MCF 10A (cell line): ENCODE measurements at regions of chr1 and their contacts with region 1.

Region 1: DNA sequence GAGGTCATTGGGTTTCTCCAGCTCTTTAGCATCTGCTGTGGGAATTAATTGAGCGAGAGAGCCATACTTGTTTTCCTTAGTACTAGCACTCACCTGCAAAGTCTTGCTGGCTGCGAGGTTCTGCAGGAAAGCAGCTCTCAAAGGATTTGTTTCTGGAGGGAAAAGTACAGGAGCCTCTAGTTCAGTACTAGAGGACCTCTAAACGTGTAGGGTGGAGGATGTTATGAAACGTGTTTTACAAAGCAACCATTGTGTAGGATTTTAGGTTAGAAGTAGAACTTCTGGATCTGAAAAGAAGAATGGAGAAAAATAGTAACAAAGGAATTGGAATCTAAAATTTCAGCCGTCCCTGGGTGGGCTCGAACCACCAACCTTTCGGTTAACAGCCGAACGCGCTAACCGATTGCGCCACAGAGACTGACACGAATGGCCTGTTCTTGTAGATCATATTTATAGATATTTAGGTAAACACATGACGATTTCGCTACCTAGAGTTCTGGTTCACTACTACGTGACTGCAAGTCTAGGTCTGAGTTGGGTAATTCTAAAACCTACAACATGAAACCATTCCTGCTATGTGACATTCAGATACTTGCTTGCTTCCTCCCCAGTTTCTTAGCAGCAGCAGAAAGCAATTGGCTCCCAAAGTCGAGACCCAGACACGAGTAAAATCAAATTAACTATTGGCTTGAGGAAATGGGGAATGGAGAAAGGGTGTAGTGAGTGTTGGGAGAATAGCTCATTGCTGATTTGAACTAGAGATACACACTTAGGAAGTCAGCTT is 60.2 kb upstream of the CFAP126 start:
- DNase-seq: peak; percentile 72
- H3K4me3 Mint-ChIP-seq: peak overlapping the region; percentile 37
- H3K27ac Mint-ChIP-seq: peak overlapping the region; percentile 32
- H3K4me1 Mint-ChIP-seq: peaks cover 16% of the 10 kb centered on the region
- H3K27me3 Mint-ChIP-seq: peaks cover 14% of the 10 kb centered on the region
- CTCF ChIP-seq: no peak

Region 2: GRCh38 chr1:161399257-161399998 is 28.5 kb before region 1 on chr1:
- CTCF ChIA-PET with region 1: interaction called, 4 read pairs
- POLR2A ChIA-PET with region 1: interaction called, 10 read pairs
- intact Hi-C with region 1: loop called (anchors 2 kb)
- DNase-seq: peak; percentile 93
- H3K4me3 Mint-ChIP-seq: peak overlapping the region; percentile 82
- H3K27ac Mint-ChIP-seq: peak overlapping the region; percentile 100
- H3K4me1 Mint-ChIP-seq: peaks cover 18% of the 10 kb centered on the region
- H3K27me3 Mint-ChIP-seq: no peaks in the 10 kb centered on the region
- CTCF ChIP-seq: peak; percentile 57

Region 3: GRCh38 chr1:161440312-161440894 is 12.5 kb after region 1 on chr1:
- CTCF ChIA-PET with region 1: interaction called, 27 read pairs
- POLR2A ChIA-PET with region 1: interaction called, 13 read pairs
- intact Hi-C with region 1: no loop called
- DNase-seq: peak; percentile 84
- H3K4me3 Mint-ChIP-seq: peak overlapping the region; percentile 89
- H3K27ac Mint-ChIP-seq: peak overlapping the region; percentile 87
- H3K4me1 Mint-ChIP-seq: no peaks in the 10 kb centered on the region
- H3K27me3 Mint-ChIP-seq: no peaks in the 10 kb centered on the region
- CTCF ChIP-seq: peak; percentile 87

Region 4: GRCh38 chr1:161473363-161473762 is 45.4 kb after region 1 on chr1:
- CTCF ChIA-PET with region 1: no interaction called
- POLR2A ChIA-PET with region 1: no interaction called
- intact Hi-C with region 1: no loop called
- DNase-seq: peak; percentile 56
- H3K4me3 Mint-ChIP-seq: peak overlapping the region; percentile 59
- H3K27ac Mint-ChIP-seq: no peak overlapping the region
- H3K4me1 Mint-ChIP-seq: no peaks in the 10 kb centered on the region
- H3K27me3 Mint-ChIP-seq: no peaks in the 10 kb centered on the region
- CTCF ChIP-seq: no peak